ENCODE measurements at regions of chr2 and their contacts with region 1.

Region 1: GRCh38 chr2:11124503-11125068 is 30.7 kb upstream of the SLC66A3 start:
- DNase-seq: peak in 4 of 5 donors; percentile 64 to 82 (median 75)
- H3K4me3 ChIP-seq: no peak overlapping the region
- H3K27ac ChIP-seq: no peak overlapping the region
- H3K4me1 ChIP-seq: no peaks in the 10 kb centered on the region
- H3K27me3 ChIP-seq: no peaks in the 10 kb centered on the region
- CTCF ChIP-seq: peak; percentile 70

Region 2: DNA sequence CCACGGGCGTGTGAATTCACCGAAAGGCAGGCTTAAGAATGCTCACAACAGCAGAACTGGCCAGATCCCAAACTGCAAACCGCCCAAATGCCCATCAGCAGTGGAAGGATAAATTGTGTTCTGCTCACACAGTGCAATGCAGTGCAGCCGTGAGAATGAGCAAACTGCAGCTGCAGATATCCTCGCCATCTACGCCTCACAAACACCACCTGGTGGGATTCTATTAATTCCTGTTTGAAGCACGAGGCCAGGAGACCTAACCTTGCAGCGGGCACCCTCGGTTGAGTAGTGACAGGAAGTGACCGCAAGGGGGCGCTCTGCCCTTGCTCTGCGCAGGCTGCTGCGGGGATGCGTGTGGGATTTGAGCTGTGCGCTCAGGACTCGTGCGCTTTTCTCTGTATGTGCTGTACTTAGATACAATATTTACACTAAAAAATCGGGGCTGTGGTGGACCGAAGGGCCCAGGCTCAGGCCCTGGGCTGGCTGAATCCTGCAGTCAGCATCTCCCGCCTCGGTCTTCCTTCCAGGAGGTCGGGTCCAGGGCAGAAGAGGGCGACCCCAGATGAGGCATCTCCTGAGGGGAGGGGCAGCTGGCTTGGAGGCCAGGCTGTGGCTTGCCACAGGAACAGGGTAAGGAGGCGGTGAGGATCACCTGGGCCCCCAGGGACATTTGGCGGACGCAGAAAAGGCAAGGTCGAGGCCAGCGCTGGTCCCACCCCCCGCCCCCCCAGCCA is 292.2 kb before region 1 on chr2:
- intact Hi-C with region 1: loop called (anchors 5 kb)
- DNase-seq: peak; percentile 91 to 92 (median 92)
- H3K4me3 ChIP-seq: no peak overlapping the region
- H3K27ac ChIP-seq: no peak overlapping the region
- H3K4me1 ChIP-seq: peaks cover 0 to 4% (median 0%) of the 10 kb centered on the region in 3 donors
- H3K27me3 ChIP-seq: peaks cover 2% of the 10 kb centered on the region
- CTCF ChIP-seq: peak; percentile 92

Measured in kidney (tissue), 22 donors.